B cell (primary cell): ENCODE measurements at regions of chr1 and their contacts with region 1.

Region 1: GRCh38 chr1:9874959-9875635 is 35.0 kb downstream of the CTNNBIP1 start:
- DNase-seq: peak; percentile 86
- ATAC-seq: peak; percentile 98
- H3K4me3 ChIP-seq: no peak overlapping the region
- H3K4me3 Mint-ChIP-seq: no peak overlapping the region
- H3K27ac ChIP-seq: no peak overlapping the region
- H3K27ac Mint-ChIP-seq: no peak overlapping the region
- H3K4me1 ChIP-seq: peaks cover 0 to 9% of the 10 kb centered on the region in 2 donors
- H3K4me1 Mint-ChIP-seq: peaks cover 4% of the 10 kb centered on the region
- H3K27me3 ChIP-seq: no peaks in the 10 kb centered on the region
- H3K27me3 Mint-ChIP-seq: no peaks in the 10 kb centered on the region
- CTCF ChIP-seq: peak; percentile 95

Region 2: GRCh38 chr1:9842073-9842711 is 32.9 kb before region 1 on chr1:
- CTCF ChIA-PET with region 1: no interaction called
- POLR2A ChIA-PET with region 1: no interaction called
- intact Hi-C with region 1: no loop called
- DNase-seq: no peak
- ATAC-seq: no peak
- H3K4me3 ChIP-seq: no peak overlapping the region
- H3K4me3 Mint-ChIP-seq: no peak overlapping the region
- H3K27ac ChIP-seq: no peak overlapping the region
- H3K27ac Mint-ChIP-seq: no peak overlapping the region
- H3K4me1 ChIP-seq: no peaks in the 10 kb centered on the region
- H3K4me1 Mint-ChIP-seq: no peaks in the 10 kb centered on the region
- H3K27me3 ChIP-seq: no peaks in the 10 kb centered on the region
- H3K27me3 Mint-ChIP-seq: no peaks in the 10 kb centered on the region
- CTCF ChIP-seq: no peak

Region 3: GRCh38 chr1:9852410-9853248 is 22.5 kb before region 1 on chr1:
- CTCF ChIA-PET with region 1: interaction called, 15 read pairs
- POLR2A ChIA-PET with region 1: no interaction called
- intact Hi-C with region 1: no loop called
- DNase-seq: no peak
- ATAC-seq: no peak
- H3K4me3 ChIP-seq: no peak overlapping the region
- H3K4me3 Mint-ChIP-seq: no peak overlapping the region
- H3K27ac ChIP-seq: no peak overlapping the region
- H3K27ac Mint-ChIP-seq: no peak overlapping the region
- H3K4me1 ChIP-seq: peaks cover 21 to 36% of the 10 kb centered on the region in 2 donors
- H3K4me1 Mint-ChIP-seq: peaks cover 26% of the 10 kb centered on the region
- H3K27me3 ChIP-seq: no peaks in the 10 kb centered on the region
- H3K27me3 Mint-ChIP-seq: no peaks in the 10 kb centered on the region
- CTCF ChIP-seq: no peak

Region 4: DNA sequence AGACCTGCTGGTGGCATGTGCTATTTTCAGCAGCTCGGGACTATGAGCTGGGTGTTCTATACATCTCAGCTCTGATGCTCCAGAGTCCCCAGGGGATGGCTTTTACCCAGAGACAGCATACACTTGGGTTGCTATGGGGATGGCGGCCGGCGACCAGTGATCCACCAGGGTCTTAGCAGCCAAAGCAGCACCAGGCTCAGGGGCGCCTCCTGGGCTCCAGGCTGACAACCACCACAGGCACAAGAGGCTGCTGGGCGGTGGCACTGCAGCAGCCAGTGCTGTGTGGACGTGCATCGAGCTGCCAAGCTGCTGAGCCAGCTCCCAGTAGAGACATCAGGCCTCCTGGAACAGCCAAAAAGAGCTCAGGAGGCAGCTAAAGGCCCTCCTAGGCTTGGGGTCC is 13.7 kb before region 1 on chr1:
- CTCF ChIA-PET with region 1: interaction called, 16 read pairs
- POLR2A ChIA-PET with region 1: no interaction called
- intact Hi-C with region 1: no loop called
- DNase-seq: no peak
- ATAC-seq: no peak
- H3K4me3 ChIP-seq: no peak overlapping the region
- H3K4me3 Mint-ChIP-seq: no peak overlapping the region
- H3K27ac ChIP-seq: no peak overlapping the region
- H3K27ac Mint-ChIP-seq: no peak overlapping the region
- H3K4me1 ChIP-seq: no peaks in the 10 kb centered on the region
- H3K4me1 Mint-ChIP-seq: peaks cover 1% of the 10 kb centered on the region
- H3K27me3 ChIP-seq: no peaks in the 10 kb centered on the region
- H3K27me3 Mint-ChIP-seq: no peaks in the 10 kb centered on the region
- CTCF ChIP-seq: no peak

Region 5: GRCh38 chr1:10032590-10033358 is 157.7 kb after region 1 on chr1 and contains the start of gene UBE4B:
- CTCF ChIA-PET with region 1: no interaction called
- POLR2A ChIA-PET with region 1: no interaction called
- intact Hi-C with region 1: loop called (anchors 1 kb)
- DNase-seq: peak; percentile 99
- ATAC-seq: peak; percentile 94
- H3K4me3 ChIP-seq: peak within 1 kb of the TSS; percentile 70 to 93 (median 89)
- H3K4me3 Mint-ChIP-seq: peak within 1 kb of the TSS; percentile 99
- H3K27ac ChIP-seq: peak within 1 kb of the TSS; percentile 73 to 84
- H3K27ac Mint-ChIP-seq: peak within 1 kb of the TSS; percentile 96
- H3K4me1 ChIP-seq: peaks cover 18 to 19% of the 10 kb centered on the region in 2 donors
- H3K4me1 Mint-ChIP-seq: peaks cover 23% of the 10 kb centered on the region
- H3K27me3 ChIP-seq: no peaks in the 10 kb centered on the region
- H3K27me3 Mint-ChIP-seq: no peaks in the 10 kb centered on the region
- CTCF ChIP-seq: peak; percentile 89
- total RNA-seq, gene UBE4B: 57.5 and 59.0 TPM in 2 replicates